Psoas muscle (tissue), 8 donors: ENCODE measurements at regions of chr16 and their contacts with region 1.

Region 1: DNA sequence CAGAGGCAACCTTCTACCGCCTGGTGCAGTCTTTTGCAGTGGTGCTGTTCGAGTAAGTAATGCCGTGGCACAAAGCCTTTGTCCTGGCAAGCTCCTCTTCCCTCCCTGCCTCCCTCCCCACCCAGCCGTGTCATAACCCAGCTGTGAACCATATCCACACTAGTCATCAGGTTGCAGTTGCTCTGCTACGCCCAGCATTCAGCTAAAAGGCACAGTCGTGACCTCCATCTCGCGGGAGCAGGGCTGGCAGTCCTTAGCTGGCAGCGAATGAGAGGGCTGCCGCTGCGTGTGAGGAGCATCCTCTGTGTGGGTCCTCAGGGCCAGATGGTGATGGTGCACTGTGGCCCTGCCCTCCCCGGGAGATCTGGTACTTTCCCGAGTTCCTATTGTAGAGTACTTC is 39.3 kb downstream of the CIBAR2 start:
- DNase-seq: peak; percentile 72 to 88
- ATAC-seq: peak; percentile 87 to 99 (median 98)
- H3K4me3 ChIP-seq: no peak overlapping the region
- H3K27ac ChIP-seq: peak overlapping the region; percentile 7
- H3K4me1 ChIP-seq: peaks cover 13% of the 10 kb centered on the region
- H3K27me3 ChIP-seq: no peaks in the 10 kb centered on the region
- CTCF ChIP-seq: no peak

Region 2: DNA sequence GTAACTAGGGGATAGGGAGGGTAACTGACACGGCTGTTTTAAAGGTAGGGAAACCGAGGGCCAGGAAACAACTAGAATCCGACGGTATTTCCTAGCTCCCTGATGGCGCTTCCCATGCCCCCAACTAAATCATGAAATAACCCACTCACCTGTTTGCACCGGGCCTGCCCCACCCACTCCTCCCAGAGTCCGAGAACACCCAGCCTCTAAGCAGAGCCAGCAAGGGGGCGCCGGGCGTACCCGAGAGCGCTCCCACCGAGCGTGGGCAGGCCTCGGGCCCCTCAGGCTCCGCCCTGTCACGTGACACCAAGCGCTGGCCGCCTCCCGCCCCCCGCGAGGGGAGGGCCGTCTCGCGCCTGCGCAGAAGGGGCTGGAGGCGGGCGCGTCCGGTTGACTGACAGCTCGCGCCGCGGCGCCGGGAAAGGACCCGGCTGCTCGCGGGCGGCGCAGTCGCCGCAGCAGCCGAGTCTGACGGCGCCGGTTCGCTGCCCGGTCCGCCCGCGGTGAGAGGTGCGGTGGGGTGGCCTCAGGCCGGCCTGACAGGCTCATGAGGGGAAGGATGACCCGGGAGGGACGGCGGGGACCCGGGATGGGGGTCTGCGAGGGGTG is 45.5 kb before region 1 on chr16 and contains the start of gene KIAA0513:
- intact Hi-C with region 1: loop called (anchors 5 kb)
- DNase-seq: peak; percentile 94 to 97
- ATAC-seq: peak; percentile 90 to 93 (median 92)
- H3K4me3 ChIP-seq: peak within 1 kb of the TSS; percentile 80
- H3K27ac ChIP-seq: peak within 1 kb of the TSS; percentile 87
- H3K4me1 ChIP-seq: peaks cover 22% of the 10 kb centered on the region
- H3K27me3 ChIP-seq: no peaks in the 10 kb centered on the region
- CTCF ChIP-seq: peak; percentile 11
- total RNA-seq, gene KIAA0513: 8.7 to 14.3 (median 13.3) TPM